ENCODE measurements at regions of chr10 and their contacts with region 1.

Region 1: DNA sequence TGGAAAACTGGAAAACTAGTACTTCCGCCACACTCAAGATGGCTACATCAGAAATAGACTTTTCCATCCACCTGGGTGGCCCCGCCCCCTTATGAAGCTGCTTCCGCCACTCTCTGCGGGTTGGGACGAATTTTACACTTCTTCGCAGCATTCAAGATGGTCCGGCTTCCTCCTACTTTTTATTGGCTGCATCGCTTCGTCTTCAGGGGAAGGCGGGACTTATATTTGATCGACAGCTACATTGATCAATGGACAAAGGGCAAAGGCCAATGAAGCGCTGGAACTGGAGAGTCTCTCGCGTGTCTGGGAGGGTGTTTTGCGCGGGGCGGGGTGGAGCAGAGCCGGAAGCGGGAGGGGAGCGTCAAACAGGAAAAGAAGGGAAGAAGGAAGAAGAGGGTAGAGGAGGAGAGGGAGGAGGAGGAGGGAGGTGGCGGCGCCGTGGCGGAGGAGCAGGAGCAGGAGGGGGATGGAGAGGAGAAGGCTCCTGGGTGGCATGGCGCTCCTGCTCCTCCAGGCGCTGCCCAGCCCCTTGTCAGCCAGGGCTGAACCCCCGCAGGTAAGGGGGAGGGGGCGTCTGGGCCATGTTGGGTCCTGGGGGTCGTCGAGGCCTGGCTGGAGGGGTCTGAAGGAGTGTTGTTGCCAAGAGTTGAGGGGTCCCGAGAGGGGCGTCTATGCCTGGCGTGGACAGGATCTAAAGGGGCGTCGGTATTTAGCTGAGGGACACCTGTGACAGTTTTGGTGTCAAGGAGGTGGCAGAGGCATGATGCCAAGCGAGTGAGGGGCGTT is at the start of gene WBP1L:
- DNase-seq: peak; percentile 91 to 96
- H3K4me3 ChIP-seq: peak within 1 kb of the TSS; percentile 76 to 92 (median 90)
- H3K27ac ChIP-seq: no peak within 1 kb of the TSS
- H3K4me1 ChIP-seq: peaks cover 0 to 6% (median 2%) of the 10 kb centered on the region in 4 experiments; a peak in 4 of 7 replicates
- H3K27me3 ChIP-seq: no peaks in the 10 kb centered on the region; a peak in 1 of 7 replicates
- CTCF ChIP-seq: no peak
- EP300 ChIP-seq: no peak
- POLR2A ChIP-seq: peak; percentile 40 to 50; a peak in 2 of 3 replicates
- RAD21 ChIP-seq: no peak
- total RNA-seq, gene WBP1L: 26.2 and 26.6 TPM in 2 replicates

Region 2: GRCh38 chr10:102729029-102730026 is 14.5 kb before region 1 on chr10:
- CTCF ChIA-PET with region 1: interaction called, 7 read pairs
- POLR2A ChIA-PET with region 1: interaction called, 31 read pairs
- DNase-seq: peak in 1 of 2 experiments; percentile 97
- H3K4me3 ChIP-seq: no peak overlapping the region
- H3K27ac ChIP-seq: 0 out of 2 replicates have a peak overlapping the region, but pooled peaks have one; percentile 1
- H3K4me1 ChIP-seq: no peaks in the 10 kb centered on the region
- H3K27me3 ChIP-seq: no peaks in the 10 kb centered on the region
- CTCF ChIP-seq: peak; percentile 90 to 97 (median 97)
- EP300 ChIP-seq: no peak
- POLR2A ChIP-seq: no peak
- RAD21 ChIP-seq: peak; percentile 94 to 98

Region 3: GRCh38 chr10:102776779-102777456 is 33.1 kb after region 1 on chr10:
- CTCF ChIA-PET with region 1: no interaction called
- POLR2A ChIA-PET with region 1: interaction called, 11 read pairs
- DNase-seq: peak; percentile 43 to 67
- H3K4me3 ChIP-seq: peak overlapping the region in 3 of 4 experiments; percentile 8 to 41 (median 16); a peak in 4 of 8 replicates
- H3K27ac ChIP-seq: 0 out of 2 replicates have a peak overlapping the region, but pooled peaks have one; percentile 20
- H3K4me1 ChIP-seq: peaks cover 23 to 32% (median 30%) of the 10 kb centered on the region in 4 experiments
- H3K27me3 ChIP-seq: no peaks in the 10 kb centered on the region; a peak in 2 of 7 replicates
- CTCF ChIP-seq: no peak
- EP300 ChIP-seq: peak in 1 of 2 experiments; percentile 46; a peak in 1 of 3 replicates
- POLR2A ChIP-seq: no peak
- RAD21 ChIP-seq: no peak; a peak in 1 of 4 replicates